ENCODE measurements at regions of chr5 and their contacts with region 1.

Region 1: DNA sequence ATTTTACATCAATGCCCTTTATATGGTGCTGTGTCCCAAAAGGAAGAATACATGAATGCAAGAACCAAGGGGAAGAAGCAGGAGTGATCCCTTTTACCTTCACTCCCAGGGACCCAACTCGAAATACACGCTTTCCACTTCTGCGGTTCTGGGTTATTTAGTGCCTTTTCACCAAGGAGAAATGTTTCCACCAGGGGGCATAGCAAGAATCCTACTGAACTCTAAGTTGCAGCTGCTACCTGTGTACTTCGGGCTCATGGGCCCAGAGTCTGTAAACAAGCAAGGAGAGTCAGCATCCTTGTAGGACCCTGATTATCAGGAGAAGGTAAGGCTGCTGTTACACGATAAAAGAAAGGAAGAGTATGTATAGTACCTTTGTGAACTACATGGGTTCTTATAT is 45.7 kb downstream of the DPYSL3 start:
- DNase-seq: peak; percentile 46
- ATAC-seq: peak; percentile 83
- H3K4me3 Mint-ChIP-seq: no peak overlapping the region
- H3K27ac Mint-ChIP-seq: peak overlapping the region; percentile 73
- H3K4me1 Mint-ChIP-seq: peaks cover 57% of the 10 kb centered on the region
- H3K27me3 Mint-ChIP-seq: no peaks in the 10 kb centered on the region
- CTCF ChIP-seq: 0 out of 2 replicates have a peak, but pooled peaks have one; percentile 41

Region 2: GRCh38 chr5:147453875-147454814 is 10.1 kb before region 1 on chr5:
- CTCF ChIA-PET with region 1: interaction called, 44 read pairs
- POLR2A ChIA-PET with region 1: interaction called, 3 read pairs
- DNase-seq: peak; percentile 94
- ATAC-seq: peak; percentile 62
- H3K4me3 Mint-ChIP-seq: peak overlapping the region; percentile 96
- H3K27ac Mint-ChIP-seq: peak overlapping the region; percentile 95
- H3K4me1 Mint-ChIP-seq: peaks cover 72% of the 10 kb centered on the region
- H3K27me3 Mint-ChIP-seq: no peaks in the 10 kb centered on the region; the same call in 1 of the 2 replicates
- CTCF ChIP-seq: peak; percentile 92

Region 3: DNA sequence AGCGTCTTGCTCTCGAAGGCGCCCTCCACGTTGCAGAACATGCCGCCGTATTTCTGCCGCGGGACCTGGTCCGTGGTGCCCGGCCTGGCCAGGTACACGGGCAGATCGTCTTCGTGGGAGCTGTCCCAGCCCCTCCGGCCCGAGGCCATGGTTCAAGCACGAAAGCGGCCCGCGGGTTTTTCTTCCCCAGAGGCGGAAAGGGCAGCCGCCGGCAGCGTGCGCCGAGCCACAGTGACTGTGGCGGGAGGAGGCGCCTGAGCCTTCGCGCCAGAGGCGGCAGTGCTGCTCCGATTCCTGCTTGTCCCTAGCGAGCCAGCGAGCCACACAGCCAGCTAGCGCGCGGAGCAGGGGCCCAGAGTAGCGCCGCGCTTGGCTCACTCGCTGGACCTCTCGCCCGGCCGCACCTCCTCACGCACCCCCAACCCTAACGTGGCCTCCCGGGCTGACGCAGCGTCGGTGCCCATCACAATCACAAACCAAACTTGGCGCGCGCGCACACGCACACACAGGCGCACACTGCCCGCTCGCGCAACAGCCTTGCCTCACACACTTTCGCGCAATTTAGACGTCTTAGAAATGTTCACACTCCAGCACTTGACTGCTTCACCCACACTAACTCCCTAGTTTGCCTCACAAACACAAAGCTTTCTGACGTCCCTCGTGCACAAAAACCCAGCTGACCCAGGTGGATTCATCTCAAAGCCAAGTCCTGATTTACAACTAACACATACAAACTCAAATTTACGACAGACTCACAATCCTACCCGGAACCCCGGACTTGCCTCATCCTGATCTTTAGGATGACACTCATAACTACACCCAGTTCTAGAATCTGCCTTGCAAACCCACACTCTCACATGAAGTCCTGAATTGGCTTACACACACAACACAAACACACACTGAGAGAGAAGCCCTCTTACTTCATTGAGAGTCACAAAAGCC is 45.8 kb after region 1 on chr5 and contains the start of gene DPYSL3:
- CTCF ChIA-PET with region 1: interaction called, 18 read pairs
- POLR2A ChIA-PET with region 1: no interaction called
- DNase-seq: peak; percentile 85
- ATAC-seq: peak; percentile 96
- H3K4me3 Mint-ChIP-seq: peak within 1 kb of the TSS; percentile 69
- H3K27ac Mint-ChIP-seq: no peak within 1 kb of the TSS
- H3K4me1 Mint-ChIP-seq: peaks cover 27% of the 10 kb centered on the region
- H3K27me3 Mint-ChIP-seq: peaks cover 20% of the 10 kb centered on the region
- CTCF ChIP-seq: no peak
- total RNA-seq, gene DPYSL3: 329 to 358 TPM (median 338 TPM) in 3 replicates

Measured in WTC11 (cell line).